Keratinocyte (primary cell): ENCODE measurements at regions of chr10 and their contacts with region 1.

Region 1: GRCh38 chr10:29131952-29132820 is 156.7 kb upstream of the LYZL1 start:
- DNase-seq: no peak
- H3K4me3 ChIP-seq: no peak overlapping the region
- H3K27ac ChIP-seq: no peak overlapping the region
- H3K4me1 ChIP-seq: peaks cover 2% of the 10 kb centered on the region
- H3K27me3 ChIP-seq: no peaks in the 10 kb centered on the region
- CTCF ChIP-seq: no peak

Region 2: DNA sequence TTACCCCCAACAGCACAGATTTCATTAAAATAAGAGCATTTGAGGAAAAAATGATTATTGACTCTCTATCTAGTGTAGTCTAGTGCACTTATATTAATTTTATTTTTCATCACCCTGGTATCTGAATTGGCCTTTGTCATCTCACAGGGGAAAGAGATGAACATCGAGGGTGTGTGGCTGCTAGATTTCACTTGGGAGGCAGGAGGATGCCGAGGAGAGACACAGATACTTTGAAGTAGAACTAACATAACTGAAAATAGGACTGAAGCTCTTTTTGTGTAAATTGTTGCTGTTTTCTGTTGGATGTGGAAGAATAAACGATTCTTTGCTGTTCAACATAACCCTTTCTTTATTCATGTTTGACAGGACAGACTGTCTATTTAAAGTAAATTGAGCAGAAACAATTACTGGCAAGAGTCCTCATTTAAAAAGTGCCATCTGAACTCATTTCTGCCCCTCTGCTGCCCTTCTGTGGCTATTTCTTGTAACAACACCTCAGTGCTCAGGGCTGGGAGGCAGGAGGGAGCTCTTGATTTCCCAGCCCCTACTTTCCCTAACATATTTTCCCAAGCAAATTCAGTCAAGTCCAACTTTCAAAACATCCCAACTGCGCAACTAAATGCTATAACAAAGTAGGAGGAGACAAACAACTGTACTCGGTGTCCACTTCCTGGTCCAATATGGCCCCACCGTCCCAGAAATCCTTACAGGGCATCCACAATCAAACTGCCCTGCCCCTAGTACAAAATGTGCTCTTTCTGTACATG is 172.3 kb after region 1 on chr10:
- dilution Hi-C with region 1: loop called (anchors 25 kb)
- DNase-seq: no peak
- H3K4me3 ChIP-seq: no peak overlapping the region
- H3K27ac ChIP-seq: no peak overlapping the region
- H3K4me1 ChIP-seq: no peaks in the 10 kb centered on the region
- H3K27me3 ChIP-seq: peaks cover 5% of the 10 kb centered on the region
- CTCF ChIP-seq: peak; percentile 69 to 82 (median 75)

Region 3: DNA sequence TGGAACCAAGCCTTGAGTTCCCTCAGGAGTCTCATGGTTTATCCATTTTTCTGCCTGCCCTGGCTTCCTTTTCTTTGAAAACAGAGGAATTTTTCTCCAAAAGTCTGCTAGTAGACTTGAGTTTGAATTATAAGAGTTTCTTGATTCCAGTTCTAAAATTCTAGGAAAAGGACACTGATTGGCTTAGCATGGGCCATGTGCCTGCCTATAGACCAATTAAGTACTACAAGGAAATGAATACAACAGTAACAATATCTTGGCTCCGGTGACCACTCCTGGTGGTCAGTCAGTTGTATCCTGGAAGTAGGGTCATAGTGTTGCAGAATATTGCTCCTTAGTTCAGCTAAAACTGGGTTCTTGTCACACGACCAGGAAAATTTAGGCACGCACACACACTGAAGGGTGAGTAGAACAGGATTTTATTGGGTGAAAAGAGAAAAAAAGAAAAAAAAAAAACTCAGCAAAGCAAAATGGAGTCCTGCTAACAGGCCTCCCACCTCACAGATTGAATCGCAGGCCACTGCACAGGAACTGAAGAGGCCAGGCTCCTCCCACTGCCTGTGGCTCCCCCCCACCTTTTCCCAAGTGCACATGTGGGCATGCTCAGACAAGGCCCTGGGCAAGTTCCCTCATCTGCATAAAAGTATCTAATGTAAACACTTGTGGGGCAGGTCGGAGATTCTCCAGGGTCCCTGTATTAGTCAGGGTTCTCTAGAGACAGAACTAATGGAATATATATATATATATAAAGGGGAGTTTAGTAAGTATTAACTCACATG is 311.7 kb after region 1 on chr10:
- dilution Hi-C with region 1: no loop called
- DNase-seq: no peak
- H3K4me3 ChIP-seq: no peak overlapping the region
- H3K27ac ChIP-seq: no peak overlapping the region
- H3K4me1 ChIP-seq: peaks cover 8% of the 10 kb centered on the region
- H3K27me3 ChIP-seq: no peaks in the 10 kb centered on the region
- CTCF ChIP-seq: no peak